ENCODE measurements at regions of chr17 and their contacts with region 1.

Region 1: GRCh38 chr17:60392042-60392844 is at the start of gene USP32:
- DNase-seq: peak; percentile 87 to 97
- H3K4me3 ChIP-seq: peak within 1 kb of the TSS; percentile 88
- H3K27ac ChIP-seq: peak within 1 kb of the TSS; percentile 79
- H3K4me1 ChIP-seq: peaks cover 28% of the 10 kb centered on the region
- H3K27me3 ChIP-seq: no peaks in the 10 kb centered on the region
- CTCF ChIP-seq: peak; percentile 45; the same call in 1 of the 2 replicates
- total RNA-seq, gene USP32: 32.3 and 32.6 TPM in 2 replicates

Region 2: GRCh38 chr17:59964482-59965328 is 427.5 kb before region 1 on chr17 and contains the start of gene RNFT1:
- CTCF ChIA-PET with region 1: no interaction called
- POLR2A ChIA-PET with region 1: interaction called, 19 read pairs
- intact Hi-C with region 1: no loop called
- DNase-seq: peak; percentile 77 to 83
- H3K4me3 ChIP-seq: peak within 1 kb of the TSS; percentile 82
- H3K27ac ChIP-seq: peak within 1 kb of the TSS; percentile 71
- H3K4me1 ChIP-seq: peaks cover 19% of the 10 kb centered on the region
- H3K27me3 ChIP-seq: no peaks in the 10 kb centered on the region
- CTCF ChIP-seq: no peak
- total RNA-seq, gene RNFT1: 19.9 and 24.7 TPM in 2 replicates

Region 3: GRCh38 chr17:60599620-60600489 is 207.6 kb after region 1 on chr17 and contains the start of gene PPM1D:
- CTCF ChIA-PET with region 1: no interaction called
- POLR2A ChIA-PET with region 1: interaction called, 15 read pairs
- intact Hi-C with region 1: loop called (anchors 2 kb)
- DNase-seq: peak; percentile 93 to 98
- H3K4me3 ChIP-seq: peak within 1 kb of the TSS; percentile 87
- H3K27ac ChIP-seq: peak within 1 kb of the TSS; percentile 64
- H3K4me1 ChIP-seq: peaks cover 26% of the 10 kb centered on the region
- H3K27me3 ChIP-seq: no peaks in the 10 kb centered on the region
- CTCF ChIP-seq: no peak
- total RNA-seq, gene PPM1D: 10.4 and 12.1 TPM in 2 replicates